ENCODE measurements at regions of chr4 and their contacts with region 1.

Region 1: DNA sequence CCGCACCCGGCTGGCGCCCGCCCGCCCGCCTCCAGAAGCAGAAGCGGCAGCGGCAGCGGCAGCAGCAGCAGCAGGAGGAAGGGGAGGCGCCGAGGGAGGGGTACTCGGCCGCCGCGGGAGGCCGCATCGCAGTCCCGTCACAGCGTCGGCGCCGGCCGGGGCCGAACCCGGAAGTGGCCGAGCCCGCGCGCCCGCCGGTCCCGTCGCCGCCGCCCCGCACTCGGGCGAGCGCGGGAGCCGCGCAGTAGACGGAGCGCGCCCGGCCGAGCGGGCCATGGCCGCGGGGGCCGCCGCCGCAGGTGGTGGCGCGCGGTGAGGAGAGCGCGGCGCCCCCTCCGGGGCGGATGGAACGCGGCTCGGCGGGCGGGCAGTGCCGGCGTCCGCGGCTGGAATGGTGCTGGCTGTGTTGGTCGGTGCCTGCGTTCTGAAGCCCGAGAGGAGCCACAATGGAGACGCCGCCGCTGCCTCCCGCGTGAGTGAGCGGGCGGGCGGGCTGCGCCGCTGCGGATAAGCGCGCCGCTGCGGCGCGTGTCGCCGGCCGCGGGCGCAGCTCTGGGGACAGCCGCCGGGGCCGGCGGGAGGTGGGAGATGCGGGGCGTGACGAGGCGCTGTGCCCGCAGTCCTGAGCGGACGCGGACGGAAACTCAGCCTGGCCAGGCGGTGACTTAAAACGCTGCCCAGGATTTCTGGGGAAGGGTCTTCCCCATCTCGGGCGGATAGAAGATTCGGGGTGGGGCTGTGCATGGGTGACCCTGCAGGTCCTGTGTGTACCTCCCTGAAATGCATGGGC is at the start of gene KLHL2:
- DNase-seq: peak in 1 of 2 donors; percentile 86
- H3K4me3 ChIP-seq: peak within 1 kb of the TSS; percentile 89 to 95
- H3K27ac ChIP-seq: peak within 1 kb of the TSS; percentile 66 to 85
- H3K4me1 ChIP-seq: peaks cover 5 to 8% of the 10 kb centered on the region in 2 donors
- H3K27me3 ChIP-seq: no peaks in the 10 kb centered on the region
- CTCF ChIP-seq: peak in 1 of 3 experiments; percentile 12
- total RNA-seq, gene KLHL2: 0.96 TPM

Region 2: DNA sequence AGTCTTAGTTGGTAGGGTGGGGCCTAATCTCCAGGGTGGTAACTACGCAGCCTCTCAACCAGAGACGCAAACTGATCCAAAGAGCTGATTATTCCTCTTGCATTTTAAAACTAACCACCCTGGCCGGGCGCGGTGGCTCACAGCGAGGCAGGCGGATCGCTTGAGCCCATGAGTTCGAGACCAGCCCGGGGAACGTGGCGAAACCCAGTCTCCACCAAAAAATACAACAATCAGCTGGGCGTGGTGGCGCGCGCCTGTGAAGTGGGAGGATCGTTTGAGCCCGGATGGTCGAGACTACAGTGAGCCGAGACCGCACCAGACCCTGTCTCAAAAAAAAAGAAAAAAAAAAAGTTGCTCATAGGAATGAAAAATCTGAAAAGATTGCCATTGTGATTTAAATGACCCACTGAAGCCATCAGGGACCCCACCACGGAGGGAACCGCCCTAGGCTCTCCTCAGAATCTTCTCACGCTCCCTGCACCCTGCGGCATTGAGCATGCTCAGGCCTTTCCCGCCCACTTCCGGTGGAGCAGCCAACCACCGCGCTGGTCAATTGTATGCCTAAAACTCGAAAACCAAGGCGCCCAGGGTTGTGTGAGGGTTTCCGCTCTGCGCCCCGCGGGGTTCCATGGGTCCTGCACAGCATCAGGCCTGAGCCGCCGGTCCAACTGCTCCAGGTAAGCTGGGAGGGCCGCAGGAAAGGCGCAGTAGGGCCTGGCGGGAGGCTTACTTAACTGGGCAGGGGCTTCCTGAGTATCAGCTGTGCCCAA is 176.0 kb before region 1 on chr4 and contains the start of gene TRIM60:
- intact Hi-C with region 1: no loop called
- DNase-seq: no peak
- H3K4me3 ChIP-seq: no peak within 1 kb of the TSS
- H3K27ac ChIP-seq: no peak within 1 kb of the TSS
- H3K4me1 ChIP-seq: no peaks in the 10 kb centered on the region
- H3K27me3 ChIP-seq: no peaks in the 10 kb centered on the region
- CTCF ChIP-seq: no peak
- total RNA-seq, gene TRIM60: not detected

Region 3: GRCh38 chr4:165131247-165131832 is 76.3 kb before region 1 on chr4:
- intact Hi-C with region 1: loop called (anchors 5 kb)
- DNase-seq: peak in 1 of 2 donors; percentile 74
- H3K4me3 ChIP-seq: no peak overlapping the region
- H3K27ac ChIP-seq: no peak overlapping the region
- H3K4me1 ChIP-seq: no peaks in the 10 kb centered on the region
- H3K27me3 ChIP-seq: no peaks in the 10 kb centered on the region
- CTCF ChIP-seq: peak; percentile 82 to 95 (median 88)

Region 4: GRCh38 chr4:165327211-165328100 is 119.8 kb after region 1 on chr4 and contains the start of gene MSMO1:
- intact Hi-C with region 1: loop called (anchors 1 kb)
- DNase-seq: peak; percentile 99 to 100
- H3K4me3 ChIP-seq: peak within 1 kb of the TSS; percentile 72 to 99
- H3K27ac ChIP-seq: peak within 1 kb of the TSS; percentile 65 to 71
- H3K4me1 ChIP-seq: peaks cover 0 to 12% of the 10 kb centered on the region in 2 donors
- H3K27me3 ChIP-seq: no peaks in the 10 kb centered on the region
- CTCF ChIP-seq: no peak
- total RNA-seq, gene MSMO1: 3.6 TPM

Region 5: DNA sequence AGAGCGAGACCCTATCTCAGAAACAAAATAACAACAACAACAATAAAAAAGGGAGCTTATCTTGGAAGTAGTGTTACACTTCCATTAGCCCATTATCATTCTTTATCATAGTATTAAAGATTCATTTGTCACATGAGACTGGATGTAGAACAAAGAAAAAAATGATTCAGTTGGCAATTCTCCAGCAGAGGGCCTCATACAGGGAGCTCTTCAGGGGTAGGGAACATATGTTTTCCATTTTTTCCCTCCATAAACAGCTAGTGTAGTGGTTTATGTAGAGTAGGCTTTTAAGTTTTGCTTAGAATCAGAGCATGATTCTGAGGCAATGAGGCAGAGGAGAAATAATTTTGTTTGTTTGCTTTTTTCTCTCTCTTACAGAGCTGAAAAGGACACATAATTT is 177.0 kb after region 1 on chr4:
- intact Hi-C with region 1: loop called (anchors 5 kb)
- DNase-seq: no peak
- H3K4me3 ChIP-seq: no peak overlapping the region
- H3K27ac ChIP-seq: peak overlapping the region; percentile 70 to 88
- H3K4me1 ChIP-seq: peaks cover 0 to 17% of the 10 kb centered on the region in 2 donors
- H3K27me3 ChIP-seq: no peaks in the 10 kb centered on the region
- CTCF ChIP-seq: no peak

Measured in ascending aorta (tissue), 2 donors.